OCI-LY7 (cell line): ENCODE measurements at regions of chr12 and their contacts with region 1.

Region 1: GRCh38 chr12:18320036-18320617 is 58.8 kb downstream of the PIK3C2G start:
- DNase-seq: peak; percentile 24
- H3K4me3 ChIP-seq: no peak overlapping the region
- H3K27ac ChIP-seq: no peak overlapping the region
- H3K4me1 ChIP-seq: no peaks in the 10 kb centered on the region
- CTCF ChIP-seq: peak; percentile 72

Region 2: DNA sequence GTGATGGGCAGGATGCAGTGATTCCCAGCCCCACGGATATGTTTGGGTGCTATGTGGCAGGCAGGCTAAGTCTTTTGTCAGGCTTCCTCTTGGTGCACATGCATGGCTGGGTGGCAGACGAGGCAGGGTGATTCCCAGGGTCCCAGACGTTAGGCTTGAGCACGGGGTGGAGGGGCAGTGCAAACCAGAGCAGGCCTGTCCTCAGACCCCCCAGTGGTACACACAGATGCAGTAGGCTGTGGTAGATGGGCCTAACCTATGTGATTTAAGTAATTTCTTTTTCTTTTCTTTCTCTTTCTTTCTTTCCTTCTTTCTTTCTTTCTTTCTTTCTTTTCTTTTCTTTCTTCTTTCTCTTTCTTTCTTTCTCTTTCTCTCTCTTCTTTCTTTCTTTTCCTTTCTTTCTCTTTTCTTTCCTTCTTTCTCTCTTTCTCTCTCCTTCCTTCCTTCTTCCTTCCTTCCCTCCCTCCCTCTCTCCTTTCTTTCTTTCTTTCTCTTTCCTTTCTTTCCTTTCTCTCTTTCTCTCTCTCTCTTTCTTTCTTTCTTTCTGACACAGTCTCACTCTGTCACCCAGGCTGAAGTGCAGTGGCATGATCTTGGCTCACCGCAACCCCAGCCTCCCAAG is 17.2 kb before region 1 on chr12:
- CTCF ChIA-PET with region 1: no interaction called
- POLR2A ChIA-PET with region 1: interaction called, 18 read pairs
- intact Hi-C with region 1: no loop called
- DNase-seq: no peak
- H3K4me3 ChIP-seq: no peak overlapping the region
- H3K27ac ChIP-seq: no peak overlapping the region
- H3K4me1 ChIP-seq: no peaks in the 10 kb centered on the region
- CTCF ChIP-seq: no peak